MCF 10A (cell line): ENCODE measurements at regions of chr13 and their contacts with region 1.

Region 1: DNA sequence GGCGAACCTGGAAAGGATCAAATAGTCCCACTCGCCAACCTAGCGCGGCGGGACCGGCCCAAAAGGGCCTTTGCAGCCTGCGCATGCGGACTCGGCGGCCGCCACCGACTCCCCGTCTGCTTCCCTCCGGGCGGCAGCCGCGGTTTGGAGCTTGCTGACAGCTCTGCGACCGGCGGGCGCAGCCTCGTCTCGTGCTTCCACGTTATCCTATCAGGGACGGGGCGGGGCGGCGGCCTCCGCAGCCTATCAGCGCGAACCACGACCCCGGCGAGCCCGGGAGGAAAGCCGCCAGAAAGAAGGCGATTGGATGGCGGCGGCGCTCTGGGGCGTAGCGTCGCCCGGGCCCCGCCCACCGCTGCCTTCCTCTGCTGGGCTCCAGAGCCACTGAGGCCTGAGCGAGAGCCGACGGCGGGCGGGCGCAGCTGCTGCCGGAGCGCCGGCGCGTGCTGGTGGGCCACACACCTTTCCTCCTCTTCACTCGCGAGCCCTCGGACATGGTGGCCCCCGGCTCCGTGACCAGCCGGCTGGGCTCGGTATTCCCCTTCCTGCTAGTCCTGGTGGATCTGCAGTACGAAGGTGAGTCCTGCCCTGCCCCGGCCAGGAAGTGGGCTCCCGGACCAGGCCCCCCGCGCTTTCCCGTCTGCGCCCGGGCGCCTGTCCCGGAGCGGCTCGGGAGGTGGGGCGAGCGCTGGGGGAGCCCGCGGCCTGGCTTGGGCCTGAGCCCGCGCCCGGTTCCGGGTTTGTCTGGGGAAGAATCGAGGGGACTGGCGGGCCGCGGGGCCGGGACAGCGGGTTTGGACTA is at the start of gene DNAJC3:
- DNase-seq: peak; percentile 99
- H3K4me3 Mint-ChIP-seq: peak within 1 kb of the TSS; percentile 90
- H3K27ac Mint-ChIP-seq: peak within 1 kb of the TSS; percentile 94
- H3K4me1 Mint-ChIP-seq: peaks cover 52% of the 10 kb centered on the region
- H3K27me3 Mint-ChIP-seq: no peaks in the 10 kb centered on the region
- CTCF ChIP-seq: no peak
- total RNA-seq, gene DNAJC3: 113 and 132 TPM in 2 replicates

Region 2: DNA sequence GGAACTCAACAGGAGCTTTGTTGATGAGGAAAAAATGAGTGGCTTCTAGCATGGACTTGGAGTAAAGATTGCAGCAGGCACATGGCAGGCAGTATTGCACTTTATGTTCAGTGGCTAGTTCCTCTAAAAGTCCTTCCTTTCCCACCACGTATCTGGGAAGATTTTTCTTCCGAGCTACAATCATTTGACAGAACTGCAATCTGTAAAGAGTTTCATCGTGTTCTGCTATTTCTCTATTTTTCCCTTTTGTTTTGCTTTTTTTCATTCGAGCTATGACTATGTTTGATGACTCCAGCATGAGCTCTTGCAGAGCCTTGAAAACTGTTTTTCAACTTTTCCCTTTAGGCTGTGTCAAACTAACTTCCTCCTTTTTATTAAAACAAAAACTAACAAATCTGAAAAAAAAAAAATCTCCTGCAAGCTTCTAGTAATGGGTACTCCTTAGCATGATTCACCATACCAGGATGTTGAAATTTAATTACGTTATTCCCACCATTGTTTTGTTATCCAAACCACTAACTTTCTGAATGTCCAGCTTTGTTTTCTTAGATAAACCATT is 112.2 kb before region 1 on chr13:
- CTCF ChIA-PET with region 1: no interaction called
- POLR2A ChIA-PET with region 1: interaction called, 11 read pairs
- intact Hi-C with region 1: no loop called
- DNase-seq: peak; percentile 92
- H3K4me3 Mint-ChIP-seq: peak overlapping the region; percentile 56
- H3K27ac Mint-ChIP-seq: peak overlapping the region; percentile 17
- H3K4me1 Mint-ChIP-seq: peaks cover 26% of the 10 kb centered on the region
- H3K27me3 Mint-ChIP-seq: no peaks in the 10 kb centered on the region
- CTCF ChIP-seq: no peak

Region 3: GRCh38 chr13:95624020-95624419 is 52.9 kb before region 1 on chr13:
- CTCF ChIA-PET with region 1: interaction called, 11 read pairs
- POLR2A ChIA-PET with region 1: interaction called, 13 read pairs
- intact Hi-C with region 1: no loop called
- DNase-seq: peak; percentile 81
- H3K4me3 Mint-ChIP-seq: no peak overlapping the region
- H3K27ac Mint-ChIP-seq: no peak overlapping the region
- H3K4me1 Mint-ChIP-seq: no peaks in the 10 kb centered on the region
- H3K27me3 Mint-ChIP-seq: no peaks in the 10 kb centered on the region
- CTCF ChIP-seq: peak; percentile 73

Region 4: DNA sequence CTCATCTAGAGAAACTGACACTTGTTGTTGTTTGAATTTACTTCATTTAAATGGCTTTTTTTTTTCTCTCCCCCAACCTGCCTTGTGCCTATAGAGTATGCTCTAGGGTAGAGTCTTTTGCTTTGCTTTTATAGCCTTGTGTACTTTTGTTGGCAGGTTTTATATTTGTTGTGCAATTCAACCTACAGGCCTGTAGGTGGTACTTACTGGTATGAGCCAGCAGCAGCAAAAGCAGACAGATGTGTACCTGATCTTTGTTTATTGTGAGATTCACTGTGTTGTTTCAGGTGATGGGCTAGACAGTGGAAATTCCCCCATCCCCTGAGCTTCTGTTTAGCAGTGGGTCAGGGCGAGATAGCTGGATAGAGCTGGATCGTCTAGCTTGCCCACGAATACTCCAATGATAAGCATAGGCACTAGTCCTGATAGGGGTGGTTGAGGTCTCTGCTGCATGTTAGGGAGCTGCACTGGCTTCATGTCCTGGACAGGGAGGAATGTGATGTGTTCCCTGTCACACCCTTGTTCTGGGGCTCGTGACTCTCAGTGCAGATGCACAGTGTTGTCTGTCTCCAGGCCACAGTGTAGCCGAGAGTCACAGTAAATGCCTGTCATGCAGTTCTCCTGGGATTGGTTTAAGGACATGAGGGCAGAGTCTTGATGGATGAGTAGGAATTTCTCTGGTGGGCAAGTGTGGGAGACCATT is 21.2 kb after region 1 on chr13:
- CTCF ChIA-PET with region 1: interaction called, 4 read pairs
- POLR2A ChIA-PET with region 1: interaction called, 19 read pairs
- intact Hi-C with region 1: loop called (anchors 2 kb)
- DNase-seq: peak; percentile 70
- H3K4me3 Mint-ChIP-seq: no peak overlapping the region
- H3K27ac Mint-ChIP-seq: peak overlapping the region; percentile 36
- H3K4me1 Mint-ChIP-seq: peaks cover 33% of the 10 kb centered on the region
- H3K27me3 Mint-ChIP-seq: no peaks in the 10 kb centered on the region
- CTCF ChIP-seq: peak; percentile 60

Region 5: DNA sequence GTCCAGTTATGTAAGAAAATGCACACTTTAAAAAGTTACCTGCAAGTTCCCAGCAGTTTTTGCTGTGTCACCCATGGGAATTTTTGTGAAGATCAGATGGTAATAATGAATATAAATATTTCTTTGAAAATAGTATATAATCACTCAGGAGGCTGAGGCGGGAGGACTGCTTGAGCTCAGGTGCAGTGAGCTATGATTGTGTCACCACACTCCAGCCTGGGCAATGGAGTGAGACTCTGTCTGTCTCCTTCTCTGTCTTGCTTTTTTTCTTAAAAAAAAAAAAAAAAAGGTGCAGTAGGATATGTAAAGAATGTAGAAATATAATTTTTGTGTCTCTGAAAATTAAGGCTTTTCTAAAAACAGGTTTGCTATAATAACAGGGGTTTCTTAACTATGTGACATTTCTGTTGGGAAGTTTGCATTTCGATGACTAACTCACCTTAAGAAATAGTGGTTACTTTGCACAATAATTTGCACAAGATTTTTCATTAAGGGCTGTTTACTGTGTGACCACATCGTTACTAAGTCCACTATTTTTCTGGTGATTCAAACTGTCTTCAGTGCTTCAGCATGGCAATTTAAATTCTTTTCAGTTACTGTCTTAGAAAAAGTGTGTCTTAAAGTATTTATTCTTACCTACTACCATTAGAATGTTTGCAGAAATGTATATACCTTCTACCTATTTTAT is 37.3 kb after region 1 on chr13:
- CTCF ChIA-PET with region 1: interaction called, 3 read pairs
- POLR2A ChIA-PET with region 1: interaction called, 22 read pairs
- intact Hi-C with region 1: loop called (anchors 1 kb)
- DNase-seq: peak; percentile 95
- H3K4me3 Mint-ChIP-seq: no peak overlapping the region
- H3K27ac Mint-ChIP-seq: peak overlapping the region; percentile 94
- H3K4me1 Mint-ChIP-seq: peaks cover 17% of the 10 kb centered on the region
- H3K27me3 Mint-ChIP-seq: no peaks in the 10 kb centered on the region
- CTCF ChIP-seq: no peak

Region 6: DNA sequence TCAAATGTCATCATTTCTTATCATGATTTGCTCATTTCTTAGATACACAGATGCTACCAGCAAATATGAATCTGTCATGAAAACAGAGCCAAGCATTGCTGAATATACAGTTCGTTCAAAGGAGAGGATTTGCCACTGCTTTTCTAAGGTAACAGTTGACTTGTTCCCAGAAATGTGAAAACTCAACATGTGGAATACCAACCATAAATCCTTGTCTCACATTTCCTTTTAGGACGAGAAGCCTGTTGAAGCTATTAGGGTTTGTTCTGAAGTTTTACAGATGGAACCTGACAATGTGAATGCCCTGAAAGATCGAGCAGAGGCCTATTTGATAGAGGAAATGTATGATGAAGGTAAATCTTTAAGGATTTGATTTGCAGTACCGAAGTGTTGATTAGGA is 86.6 kb after region 1 on chr13:
- CTCF ChIA-PET with region 1: no interaction called
- POLR2A ChIA-PET with region 1: interaction called, 4 read pairs
- intact Hi-C with region 1: loop called (anchors 5 kb)
- DNase-seq: no peak
- H3K4me3 Mint-ChIP-seq: no peak overlapping the region
- H3K27ac Mint-ChIP-seq: no peak overlapping the region
- H3K4me1 Mint-ChIP-seq: no peaks in the 10 kb centered on the region
- H3K27me3 Mint-ChIP-seq: no peaks in the 10 kb centered on the region
- CTCF ChIP-seq: no peak

Region 7: GRCh38 chr13:95800436-95800835 is 123.5 kb after region 1 on chr13:
- CTCF ChIA-PET with region 1: no interaction called
- POLR2A ChIA-PET with region 1: interaction called, 10 read pairs
- intact Hi-C with region 1: no loop called
- DNase-seq: no peak
- H3K4me3 Mint-ChIP-seq: no peak overlapping the region
- H3K27ac Mint-ChIP-seq: no peak overlapping the region
- H3K4me1 Mint-ChIP-seq: no peaks in the 10 kb centered on the region
- H3K27me3 Mint-ChIP-seq: no peaks in the 10 kb centered on the region
- CTCF ChIP-seq: no peak

Region 8: GRCh38 chr13:95874286-95874685 is 197.3 kb after region 1 on chr13:
- CTCF ChIA-PET with region 1: no interaction called
- POLR2A ChIA-PET with region 1: no interaction called
- intact Hi-C with region 1: no loop called
- DNase-seq: no peak
- H3K4me3 Mint-ChIP-seq: no peak overlapping the region
- H3K27ac Mint-ChIP-seq: no peak overlapping the region
- H3K4me1 Mint-ChIP-seq: no peaks in the 10 kb centered on the region
- H3K27me3 Mint-ChIP-seq: no peaks in the 10 kb centered on the region
- CTCF ChIP-seq: no peak